Activated T-helper 1 cell treated with anti-CD3 and anti-CD28 coated beads, Interleukin-12 subunit alpha, Interleukin-12 subunit beta, Interleukin-2, Interleukin-4 antibody, amounts not matched to agents 30 ng/mL and 10 ng/mL and 1 ng/mL, durations not matched to agents 14 hours and 24 hours and 36 hours (primary cell): ENCODE measurements at regions of chr13 and their contacts with region 1.

Region 1: GRCh38 chr13:77345150-77345780 is 18.4 kb upstream of the MYCBP2 start:
- DNase-seq: no peak
- H3K4me3 Mint-ChIP-seq: no peak overlapping the region
- H3K27ac Mint-ChIP-seq: peak overlapping the region; percentile 88
- H3K4me1 Mint-ChIP-seq: peaks cover 13% of the 10 kb centered on the region
- H3K27me3 Mint-ChIP-seq: peaks cover 3% of the 10 kb centered on the region

Region 2: GRCh38 chr13:77213644-77214043 is 131.6 kb before region 1 on chr13:
- intact Hi-C with region 1: no loop called
- DNase-seq: no peak
- H3K4me3 Mint-ChIP-seq: no peak overlapping the region
- H3K27ac Mint-ChIP-seq: no peak overlapping the region
- H3K4me1 Mint-ChIP-seq: peaks cover 11% of the 10 kb centered on the region
- H3K27me3 Mint-ChIP-seq: no peaks in the 10 kb centered on the region

Region 3: DNA sequence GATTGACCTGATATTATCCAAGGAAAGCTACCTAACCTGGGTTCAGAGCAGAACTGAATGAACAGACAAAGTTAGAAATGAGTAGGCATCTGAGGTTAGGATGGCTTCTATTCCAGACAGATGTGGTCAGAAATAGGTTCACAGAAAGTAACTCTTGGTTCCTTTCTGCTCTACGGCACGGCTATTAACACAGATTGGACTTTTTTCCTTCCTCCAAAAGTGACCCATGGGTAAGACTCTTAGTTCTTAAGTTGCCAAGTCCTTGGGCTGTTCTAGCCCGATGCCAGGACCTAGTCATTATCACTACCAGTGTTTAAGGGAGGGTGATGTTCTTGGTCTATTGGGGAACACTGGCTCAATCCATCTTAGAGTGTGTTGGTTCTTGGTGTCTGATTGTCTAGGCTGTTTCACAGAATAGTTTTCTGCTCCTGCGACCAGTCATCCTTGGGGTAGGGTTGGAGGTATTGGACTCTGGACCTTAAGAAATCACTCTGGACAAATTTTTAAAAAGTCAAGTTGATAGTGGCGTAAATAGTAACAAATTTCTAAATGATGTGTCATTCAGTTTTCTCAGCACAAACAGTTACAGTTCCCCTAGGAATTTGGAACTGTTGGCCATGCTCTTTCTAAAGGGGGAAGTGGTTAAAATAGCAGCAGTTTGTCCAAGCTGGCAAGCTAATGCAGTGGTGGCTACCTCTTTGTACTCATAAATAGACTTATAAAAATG is 41.8 kb after region 1 on chr13:
- intact Hi-C with region 1: loop called (anchors 1 kb)
- DNase-seq: no peak
- H3K4me3 Mint-ChIP-seq: no peak overlapping the region
- H3K27ac Mint-ChIP-seq: no peak overlapping the region
- H3K4me1 Mint-ChIP-seq: peaks cover 11% of the 10 kb centered on the region
- H3K27me3 Mint-ChIP-seq: peaks cover 42% of the 10 kb centered on the region

Region 4: GRCh38 chr13:77429320-77430142 is 84.3 kb after region 1 on chr13:
- intact Hi-C with region 1: loop called (anchors 1 kb)
- DNase-seq: no peak
- H3K4me3 Mint-ChIP-seq: no peak overlapping the region
- H3K27ac Mint-ChIP-seq: peak overlapping the region; percentile 49
- H3K4me1 Mint-ChIP-seq: peaks cover 11% of the 10 kb centered on the region
- H3K27me3 Mint-ChIP-seq: no peaks in the 10 kb centered on the region

Region 5: DNA sequence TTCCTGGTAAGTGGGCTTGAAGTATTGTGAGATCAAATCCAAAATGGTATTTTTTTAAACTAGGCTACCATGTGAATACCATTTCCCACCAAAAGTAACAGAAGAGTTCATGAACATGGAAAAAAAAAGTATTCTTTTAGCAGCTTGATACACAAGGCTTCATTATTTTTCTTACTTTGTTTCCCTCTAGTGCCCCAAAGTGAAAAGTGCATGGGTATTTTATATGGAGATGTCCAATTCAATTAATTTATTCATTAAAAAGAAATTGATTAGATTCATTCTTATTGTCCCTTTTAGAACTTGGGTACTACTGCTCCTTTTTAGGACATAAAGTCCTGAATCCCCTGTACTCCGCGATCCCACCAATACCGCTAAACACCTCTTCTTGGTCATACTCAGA is 161.6 kb after region 1 on chr13:
- intact Hi-C with region 1: no loop called
- DNase-seq: no peak
- H3K4me3 Mint-ChIP-seq: no peak overlapping the region
- H3K27ac Mint-ChIP-seq: no peak overlapping the region
- H3K4me1 Mint-ChIP-seq: peaks cover 22% of the 10 kb centered on the region
- H3K27me3 Mint-ChIP-seq: no peaks in the 10 kb centered on the region

Region 6: DNA sequence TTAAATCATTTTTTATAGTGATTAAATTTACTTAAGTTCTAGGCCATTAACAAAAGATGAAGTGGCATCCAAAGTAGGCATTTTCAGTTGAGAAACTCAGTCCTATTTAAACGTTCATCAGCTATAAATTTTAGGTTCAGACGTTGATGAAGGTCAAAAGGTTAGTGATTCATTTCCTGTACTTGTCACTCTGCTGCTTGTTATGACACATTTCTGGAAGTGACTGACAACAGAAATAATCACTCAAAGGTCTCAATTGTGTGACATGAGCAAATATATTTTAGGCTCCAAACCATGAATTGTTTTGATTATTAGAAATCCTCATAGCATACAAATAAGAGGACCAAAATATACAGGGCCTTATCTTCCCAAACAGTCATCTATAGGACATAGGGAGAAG is 583.6 kb after region 1 on chr13:
- intact Hi-C with region 1: no loop called
- DNase-seq: no peak
- H3K4me3 Mint-ChIP-seq: no peak overlapping the region
- H3K27ac Mint-ChIP-seq: no peak overlapping the region
- H3K4me1 Mint-ChIP-seq: peaks cover 18% of the 10 kb centered on the region
- H3K27me3 Mint-ChIP-seq: peaks cover 4% of the 10 kb centered on the region